Activated CD8-positive, alpha-beta memory T cell treated with anti-CD3 and anti-CD28 coated beads, Interleukin-2, amount 10 ng/mL, durations not matched to agents 7 days and 5 days (primary cell): ENCODE measurements at regions of chr7 and their contacts with region 1.

Region 1: DNA sequence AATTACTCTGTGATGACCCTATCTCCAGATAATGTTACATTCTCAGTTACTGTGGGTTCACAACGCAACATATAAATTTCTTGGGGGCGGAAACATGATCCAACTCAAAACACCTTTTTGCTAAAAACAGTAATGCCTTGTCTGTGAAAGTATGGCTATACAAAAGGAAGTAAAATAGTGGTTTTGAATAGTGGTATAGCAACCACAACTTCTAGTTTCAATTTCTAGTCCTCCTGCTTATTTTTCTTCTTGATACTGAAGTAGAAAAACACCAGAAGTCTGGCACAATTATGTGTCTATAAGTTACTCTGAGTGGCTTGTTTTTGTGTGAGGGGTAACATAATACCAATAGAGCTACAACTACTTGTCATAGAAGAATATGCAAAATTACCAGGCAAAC is 21.5 kb upstream of the ZNF800 start:
- DNase-seq: no peak
- ATAC-seq: peak; percentile 80
- H3K4me3 Mint-ChIP-seq: no peak overlapping the region
- H3K27ac Mint-ChIP-seq: peak overlapping the region; percentile 78
- H3K4me1 Mint-ChIP-seq: peaks cover 47% of the 10 kb centered on the region
- H3K27me3 Mint-ChIP-seq: peaks cover 6% of the 10 kb centered on the region

Region 2: GRCh38 chr7:127447326-127447945 is 33.5 kb after region 1 on chr7:
- CTCF ChIA-PET with region 1: interaction called, 10 read pairs
- DNase-seq: peak; percentile 75
- ATAC-seq: peak; percentile 100
- H3K4me3 Mint-ChIP-seq: no peak overlapping the region
- H3K27ac Mint-ChIP-seq: no peak overlapping the region
- H3K4me1 Mint-ChIP-seq: peaks cover 8% of the 10 kb centered on the region
- H3K27me3 Mint-ChIP-seq: peaks cover 45% of the 10 kb centered on the region

Region 3: DNA sequence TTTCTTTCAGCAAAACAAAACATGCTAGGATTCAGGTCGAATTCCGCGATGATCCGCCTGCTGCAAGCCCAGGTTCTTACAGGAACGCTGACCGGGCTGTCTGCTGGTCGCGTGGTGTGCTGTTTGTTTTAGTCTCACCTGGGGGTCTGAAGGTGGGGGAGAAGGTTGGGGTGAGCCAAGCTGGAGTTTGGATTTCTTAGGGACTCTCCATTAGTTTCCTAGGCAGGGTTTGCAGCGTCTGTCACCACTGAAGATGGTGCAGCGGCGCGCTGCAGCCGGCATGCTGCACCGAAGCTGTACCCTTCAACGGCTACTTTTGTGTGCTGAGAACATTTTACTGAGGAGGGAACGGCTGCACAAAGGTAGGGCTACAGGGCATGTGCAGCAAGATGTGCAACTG is 122.8 kb after region 1 on chr7:
- CTCF ChIA-PET with region 1: no interaction called
- DNase-seq: no peak
- ATAC-seq: no peak
- H3K4me3 Mint-ChIP-seq: no peak overlapping the region
- H3K27ac Mint-ChIP-seq: no peak overlapping the region
- H3K4me1 Mint-ChIP-seq: peaks cover 2% of the 10 kb centered on the region
- H3K27me3 Mint-ChIP-seq: peaks cover 44% of the 10 kb centered on the region